Lower leg skin (tissue), 4 donors: ENCODE measurements at regions of chr17 and their contacts with region 1.

Region 1: GRCh38 chr17:50547035-50547735 is at the start of gene SPATA20:
- DNase-seq: peak; percentile 91 to 99
- H3K4me3 ChIP-seq: peak within 1 kb of the TSS; percentile 39
- CTCF ChIP-seq: peak in 1 of 3 donors; percentile 86
- POLR2A ChIP-seq: peak in 1 of 2 donors; percentile 15
- total RNA-seq, gene SPATA20: 27.6 to 56.0 (median 40.6) TPM

Region 2: GRCh38 chr17:50626037-50626574 is 78.9 kb after region 1 on chr17:
- intact Hi-C with region 1: loop called (anchors 5 kb)
- DNase-seq: peak; percentile 64 to 95
- H3K4me3 ChIP-seq: no peak overlapping the region
- CTCF ChIP-seq: peak in 1 of 3 donors; percentile 27
- POLR2A ChIP-seq: no peak

Region 3: DNA sequence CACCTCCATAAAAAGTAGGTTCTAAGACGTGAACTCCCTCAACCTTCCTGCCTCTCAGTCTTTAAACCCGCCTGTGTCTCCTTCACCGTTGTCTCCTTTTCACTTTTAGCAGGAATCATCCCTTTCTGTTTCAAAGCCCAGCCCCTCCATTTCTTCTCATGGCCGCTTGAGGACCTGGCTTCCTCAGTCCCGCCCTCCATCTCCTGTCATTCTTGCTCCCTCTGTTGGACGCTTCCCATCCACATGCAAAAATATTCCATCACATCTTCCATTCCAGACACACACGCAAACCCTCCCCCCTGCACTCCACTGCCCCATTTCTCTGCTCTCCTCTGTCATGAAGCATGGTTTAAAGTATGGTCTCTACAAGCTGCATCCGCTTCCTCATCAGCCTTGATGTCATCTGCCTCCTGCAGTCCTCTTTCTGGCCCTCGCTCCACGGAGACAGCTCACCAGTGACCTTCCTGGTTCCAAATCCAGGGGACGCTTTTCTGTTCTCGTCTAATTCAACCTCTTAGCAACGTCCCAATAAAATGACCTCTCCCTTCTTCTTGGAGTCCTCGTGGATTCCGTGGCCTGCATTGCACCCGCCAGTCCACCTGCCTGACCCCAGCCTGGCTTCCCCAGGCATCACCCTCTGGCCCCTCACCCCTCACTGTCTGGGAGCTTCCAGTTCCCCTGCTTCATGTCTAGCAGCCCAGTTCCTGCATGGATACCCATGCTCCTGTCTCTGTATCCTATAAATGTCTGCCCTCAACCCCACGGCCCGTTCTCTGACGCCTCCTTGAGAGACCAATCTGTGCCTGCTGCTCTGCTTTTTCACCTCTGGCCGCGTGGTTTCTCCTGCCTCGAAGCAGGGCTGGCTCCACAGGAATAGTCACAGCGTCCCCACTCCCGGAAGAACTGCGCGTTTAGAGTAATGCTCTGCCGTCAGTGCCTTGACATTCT is 134.4 kb after region 1 on chr17:
- intact Hi-C with region 1: loop called (anchors 5 kb)
- DNase-seq: no peak
- H3K4me3 ChIP-seq: no peak overlapping the region
- CTCF ChIP-seq: no peak
- POLR2A ChIP-seq: no peak